Posterior vena cava (tissue), 2 donors: ENCODE measurements at regions of chr13 and their contacts with region 1.

Region 1: DNA sequence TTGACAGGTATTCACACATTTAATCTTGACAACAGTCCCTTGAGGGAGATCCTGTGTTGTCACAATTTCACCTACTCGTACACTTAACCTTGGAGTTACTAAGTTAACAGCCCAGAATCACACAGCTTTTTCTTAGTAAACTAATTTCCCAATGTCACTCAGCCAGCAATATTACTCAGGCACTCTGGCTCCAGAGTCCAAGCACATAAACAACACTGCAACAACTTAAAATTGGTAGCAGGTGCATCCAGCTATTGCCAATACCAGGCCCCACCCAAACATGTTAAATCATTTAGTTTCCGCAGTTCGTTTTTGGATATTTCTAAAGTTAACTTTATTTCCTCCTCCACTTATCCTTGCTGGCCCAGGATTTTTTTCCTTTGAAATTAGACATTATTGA is 32.7 kb downstream of the LIG4 start:
- DNase-seq: no peak

Region 2: DNA sequence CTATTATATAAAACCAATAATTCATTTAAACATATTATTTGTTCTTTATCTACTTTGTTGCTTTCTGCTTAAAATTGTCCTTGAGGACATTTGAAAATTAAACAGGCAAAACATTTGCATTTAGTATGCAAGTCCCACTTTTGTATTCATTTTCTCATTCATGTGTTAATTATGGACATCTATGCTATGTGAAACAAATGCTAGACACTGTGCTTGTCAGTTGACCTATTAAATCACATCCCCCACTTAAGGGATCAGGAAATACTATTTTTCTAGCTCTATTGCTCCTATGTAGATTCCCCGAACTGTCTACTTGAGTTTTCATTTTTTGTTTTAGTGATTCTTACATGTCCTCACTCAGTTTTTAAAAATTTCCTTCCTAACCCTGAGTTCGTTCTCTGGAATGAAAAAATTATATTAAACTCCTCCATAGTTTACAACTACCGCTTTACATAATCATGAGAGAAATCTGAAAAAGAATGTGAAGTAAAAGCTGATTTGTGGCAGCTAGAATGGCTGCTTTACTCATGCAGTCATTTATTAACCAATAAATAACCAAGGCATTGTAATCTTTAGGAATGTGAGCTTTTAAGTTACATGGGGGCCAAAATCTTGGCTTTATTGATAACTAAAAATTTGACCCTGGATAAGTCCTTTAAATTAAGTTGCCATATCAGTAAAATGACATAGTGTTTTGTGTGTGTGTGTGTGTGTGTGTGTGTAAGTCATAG is 155.8 kb before region 1 on chr13:
- intact Hi-C with region 1: loop called in 1 of 2 experiments (anchors 5 kb)
- DNase-seq: no peak

Region 3: GRCh38 chr13:108200781-108201398 is 18.2 kb after region 1 on chr13:
- intact Hi-C with region 1: no loop called
- DNase-seq: no peak